ENCODE measurements at regions of chr17 and their contacts with region 1.

Region 1: GRCh38 chr17:51884783-51885182 is 273.7 kb downstream of the CA10 start:
- DNase-seq: no peak
- H3K4me3 ChIP-seq: no peak overlapping the region
- H3K27ac ChIP-seq: no peak overlapping the region
- H3K4me1 ChIP-seq: no peaks in the 10 kb centered on the region
- H3K27me3 ChIP-seq: no peaks in the 10 kb centered on the region
- CTCF ChIP-seq: no peak

Region 2: DNA sequence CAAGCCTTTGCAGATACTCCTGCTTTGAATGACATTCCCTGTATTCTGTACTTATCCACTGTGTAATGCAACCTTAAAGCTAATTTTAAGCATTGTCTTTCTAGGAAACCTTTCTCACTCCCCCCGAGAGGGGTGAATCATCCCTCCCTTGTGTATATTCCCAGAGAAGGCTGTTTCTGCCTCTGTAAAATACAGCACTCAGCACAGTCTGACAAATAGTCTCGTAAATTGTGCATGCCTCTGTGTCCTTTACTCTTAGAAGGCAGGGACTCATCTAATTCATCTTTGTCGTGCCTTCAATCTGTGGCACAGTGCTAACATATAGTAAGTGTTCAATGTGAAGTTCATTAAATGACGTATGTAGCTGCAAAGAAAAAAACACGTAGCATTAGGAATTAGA is 73.0 kb after region 1 on chr17:
- CTCF ChIA-PET with region 1: no interaction called
- dilution Hi-C with region 1: loop called (anchors 5 kb)
- in situ Hi-C with region 1: no loop called
- intact Hi-C with region 1: no loop called
- DNase-seq: no peak
- H3K4me3 ChIP-seq: no peak overlapping the region
- H3K27ac ChIP-seq: no peak overlapping the region
- H3K4me1 ChIP-seq: no peaks in the 10 kb centered on the region
- H3K27me3 ChIP-seq: no peaks in the 10 kb centered on the region
- CTCF ChIP-seq: no peak